ENCODE measurements at regions of chr6 and their contacts with region 1.

Region 1: GRCh38 chr6:52389626-52390360 is 27.8 kb downstream of the PAQR8 start:
- DNase-seq: peak; percentile 66 to 85 (median 69)
- H3K4me3 ChIP-seq: peak overlapping the region; percentile 14 to 34
- H3K4me3 Mint-ChIP-seq: peak overlapping the region; percentile 77 to 92 (median 82)
- H3K27ac ChIP-seq: peak overlapping the region; percentile 80
- H3K27ac Mint-ChIP-seq: peak overlapping the region; percentile 95 to 99 (median 97)
- H3K4me1 ChIP-seq: peaks cover 90% of the 10 kb centered on the region
- H3K4me1 Mint-ChIP-seq: peaks cover 67 to 94% (median 81%) of the 10 kb centered on the region in 4 donors
- H3K27me3 ChIP-seq: no peaks in the 10 kb centered on the region
- H3K27me3 Mint-ChIP-seq: no peaks in the 10 kb centered on the region

Region 2: GRCh38 chr6:52297433-52297832 is 92.4 kb before region 1 on chr6:
- CTCF ChIA-PET with region 1: interaction called, 3 read pairs
- POLR2A ChIA-PET with region 1: interaction called, 10 read pairs
- intact Hi-C with region 1: no loop called
- DNase-seq: peak in 1 of 5 donors; percentile 47
- H3K4me3 ChIP-seq: no peak overlapping the region
- H3K4me3 Mint-ChIP-seq: peak overlapping the region; percentile 78 to 91 (median 80)
- H3K27ac ChIP-seq: peak overlapping the region; percentile 69
- H3K27ac Mint-ChIP-seq: peak overlapping the region; percentile 22 to 99 (median 98)
- H3K4me1 ChIP-seq: peaks cover 39% of the 10 kb centered on the region
- H3K4me1 Mint-ChIP-seq: peaks cover 23 to 62% (median 36%) of the 10 kb centered on the region in 4 donors
- H3K27me3 ChIP-seq: no peaks in the 10 kb centered on the region
- H3K27me3 Mint-ChIP-seq: no peaks in the 10 kb centered on the region

Region 3: GRCh38 chr6:52310932-52311331 is 78.9 kb before region 1 on chr6:
- CTCF ChIA-PET with region 1: interaction called, 15 read pairs
- POLR2A ChIA-PET with region 1: interaction called, 48 read pairs
- intact Hi-C with region 1: no loop called
- DNase-seq: no peak
- H3K4me3 ChIP-seq: no peak overlapping the region
- H3K4me3 Mint-ChIP-seq: peak overlapping the region in 3 of 8 donors; percentile 9 to 36 (median 23)
- H3K27ac ChIP-seq: no peak overlapping the region
- H3K27ac Mint-ChIP-seq: peak overlapping the region in 3 of 7 donors; percentile 32 to 74 (median 50)
- H3K4me1 ChIP-seq: peaks cover 46% of the 10 kb centered on the region
- H3K4me1 Mint-ChIP-seq: peaks cover 35 to 73% (median 49%) of the 10 kb centered on the region in 4 donors
- H3K27me3 ChIP-seq: no peaks in the 10 kb centered on the region
- H3K27me3 Mint-ChIP-seq: no peaks in the 10 kb centered on the region

Region 4: GRCh38 chr6:52371656-52372191 is 18.1 kb before region 1 on chr6:
- CTCF ChIA-PET with region 1: interaction called, 17 read pairs
- POLR2A ChIA-PET with region 1: interaction called, 51 read pairs
- intact Hi-C with region 1: no loop called
- DNase-seq: no peak
- H3K4me3 ChIP-seq: no peak overlapping the region
- H3K4me3 Mint-ChIP-seq: no peak overlapping the region
- H3K27ac ChIP-seq: no peak overlapping the region
- H3K27ac Mint-ChIP-seq: peak overlapping the region in 5 of 7 donors; percentile 22 to 78 (median 48)
- H3K4me1 ChIP-seq: peaks cover 77% of the 10 kb centered on the region
- H3K4me1 Mint-ChIP-seq: peaks cover 58 to 91% (median 75%) of the 10 kb centered on the region in 4 donors
- H3K27me3 ChIP-seq: no peaks in the 10 kb centered on the region
- H3K27me3 Mint-ChIP-seq: no peaks in the 10 kb centered on the region

Region 5: DNA sequence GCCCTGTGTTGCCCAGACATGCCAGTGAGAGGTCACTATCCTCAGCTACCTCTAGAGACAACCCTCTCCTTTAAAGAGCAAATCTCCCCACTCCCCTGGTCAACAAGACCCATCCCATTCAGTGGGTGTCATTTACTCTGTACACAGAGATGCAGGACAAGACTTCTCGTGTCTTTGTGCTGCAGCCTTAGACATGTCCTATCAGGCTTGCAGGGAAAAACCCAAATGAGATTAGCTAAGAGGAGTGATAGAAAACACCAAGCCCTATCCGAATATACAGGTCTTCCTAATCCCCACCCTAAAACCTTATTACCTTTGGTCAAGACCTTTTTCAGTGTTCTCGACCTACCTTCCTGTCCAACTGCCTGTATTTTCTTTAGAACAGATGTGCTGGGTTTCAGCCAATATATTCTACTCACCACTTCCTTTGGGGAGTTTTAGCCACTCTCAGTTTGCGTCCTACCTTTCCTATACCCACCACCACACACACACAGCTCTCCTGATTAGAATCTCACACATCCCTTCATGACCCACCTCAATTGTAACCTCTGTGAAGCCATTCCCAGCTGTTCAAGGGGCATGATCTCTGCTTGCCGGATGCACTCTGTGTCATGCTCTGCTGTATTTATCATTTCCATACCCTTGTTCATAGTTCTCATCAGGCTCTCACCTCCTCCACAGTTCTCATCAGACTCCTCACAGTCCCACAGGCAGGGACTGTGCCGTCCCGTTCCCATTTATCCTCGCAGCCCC is 147.4 kb after region 1 on chr6:
- CTCF ChIA-PET with region 1: no interaction called
- POLR2A ChIA-PET with region 1: no interaction called
- intact Hi-C with region 1: no loop called
- DNase-seq: peak in 1 of 5 donors; percentile 7
- H3K4me3 ChIP-seq: no peak overlapping the region
- H3K4me3 Mint-ChIP-seq: peak overlapping the region in 5 of 8 donors; percentile 12 to 54 (median 42)
- H3K27ac ChIP-seq: no peak overlapping the region
- H3K27ac Mint-ChIP-seq: peak overlapping the region in 5 of 7 donors; percentile 1 to 90 (median 24)
- H3K4me1 ChIP-seq: peaks cover 40% of the 10 kb centered on the region
- H3K4me1 Mint-ChIP-seq: peaks cover 44 to 57% (median 51%) of the 10 kb centered on the region in 4 donors
- H3K27me3 ChIP-seq: no peaks in the 10 kb centered on the region
- H3K27me3 Mint-ChIP-seq: no peaks in the 10 kb centered on the region

Region 6: GRCh38 chr6:52653151-52653550 is 263.4 kb after region 1 on chr6:
- CTCF ChIA-PET with region 1: interaction called, 10 read pairs
- POLR2A ChIA-PET with region 1: no interaction called
- intact Hi-C with region 1: no loop called
- DNase-seq: no peak
- H3K4me3 ChIP-seq: no peak overlapping the region
- H3K4me3 Mint-ChIP-seq: no peak overlapping the region
- H3K27ac ChIP-seq: no peak overlapping the region
- H3K27ac Mint-ChIP-seq: peak overlapping the region in 1 of 7 donors; percentile 53
- H3K4me1 ChIP-seq: no peaks in the 10 kb centered on the region
- H3K4me1 Mint-ChIP-seq: peaks cover 3 to 9% (median 4%) of the 10 kb centered on the region in 4 donors
- H3K27me3 ChIP-seq: peaks cover 6% of the 10 kb centered on the region
- H3K27me3 Mint-ChIP-seq: peaks cover 15 to 18% of the 10 kb centered on the region in 2 donors

Measured in CD4-positive, alpha-beta memory T cell (primary cell).